K562 (cell line): ENCODE measurements at regions of chr12 and their contacts with region 1.

Region 1: DNA sequence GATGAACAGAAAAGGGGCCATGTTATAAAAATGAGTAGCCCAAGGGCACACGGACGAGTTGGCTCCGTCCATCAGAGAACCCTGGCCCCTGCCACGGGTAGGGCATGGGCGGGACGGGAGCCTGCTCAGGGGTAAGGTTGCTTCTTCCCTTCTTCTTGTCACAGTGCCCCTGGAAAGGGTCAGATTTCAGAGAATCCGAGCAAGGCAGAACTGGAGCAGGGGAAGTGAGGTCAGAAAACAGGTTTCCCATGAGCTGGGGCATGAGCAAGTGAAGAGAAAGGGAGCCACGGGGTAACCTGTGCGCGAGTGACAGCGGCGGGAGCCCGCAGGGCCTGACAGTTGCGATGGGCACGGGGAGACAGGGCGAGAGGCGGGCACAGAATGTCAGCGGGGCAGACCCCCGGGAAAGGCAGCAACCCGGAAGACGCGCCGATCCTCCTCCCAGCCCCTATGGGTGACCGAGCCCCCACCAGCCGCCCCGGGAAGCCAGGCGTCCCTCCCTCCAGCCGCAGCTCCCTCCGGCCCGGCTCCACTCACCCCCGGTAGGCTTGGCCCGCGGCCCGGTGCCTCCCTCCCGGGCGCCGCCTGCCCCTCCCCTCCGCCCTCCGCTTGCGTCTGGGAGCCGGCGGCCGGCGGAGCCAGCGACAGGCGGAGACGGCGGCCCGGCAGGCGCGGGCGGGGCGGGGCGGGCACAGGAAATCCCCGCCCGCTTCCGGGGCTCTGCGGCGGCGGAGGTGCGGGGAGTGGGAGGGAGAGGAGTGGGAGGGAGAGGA is at the start of gene ZNF641:
- DNase-seq: peak; percentile 87 to 89 (median 88)
- ATAC-seq: peak; percentile 91
- H3K4me3 ChIP-seq: peak within 1 kb of the TSS; percentile 74
- H3K27ac ChIP-seq: peak within 1 kb of the TSS; percentile 95
- H3K4me1 ChIP-seq: peaks cover 8 to 19% of the 10 kb centered on the region in 2 experiments; a peak in 4 of 5 replicates
- H3K27me3 ChIP-seq: no peaks in the 10 kb centered on the region
- CTCF ChIP-seq: no peak
- EP300 ChIP-seq: no peak
- POLR2A ChIP-seq: no peak; the same call in 1 of the 2 replicates
- RAD21 ChIP-seq: no peak
- polyA plus RNA-seq, gene ZNF641: 2.5 to 3.0 TPM

Region 2: GRCh38 chr12:48197971-48198671 is 152.3 kb before region 1 on chr12:
- CTCF ChIA-PET with region 1: no interaction called
- POLR2A ChIA-PET with region 1: no interaction called
- in situ Hi-C with region 1: no loop called
- intact Hi-C with region 1: loop called (anchors 2 kb)
- DNase-seq: peak; percentile 96 to 98 (median 96)
- ATAC-seq: peak; percentile 99
- H3K4me3 ChIP-seq: peak overlapping the region; percentile 73
- H3K27ac ChIP-seq: peak overlapping the region; percentile 100
- H3K4me1 ChIP-seq: peaks cover 4 to 9% of the 10 kb centered on the region in 2 experiments; a peak in 3 of 5 replicates
- H3K27me3 ChIP-seq: no peaks in the 10 kb centered on the region; a peak in 1 of 5 replicates
- CTCF ChIP-seq: peak in 2 of 3 experiments; percentile 0 to 18; a peak in 2 of 6 replicates
- EP300 ChIP-seq: no peak
- POLR2A ChIP-seq: peak; percentile 98
- RAD21 ChIP-seq: 0 out of 4 replicates have a peak, but pooled peaks of 1 of the 2 experiments have one; percentile 5

Region 3: GRCh38 chr12:48527891-48528675 is 177.6 kb after region 1 on chr12:
- CTCF ChIA-PET with region 1: no interaction called
- POLR2A ChIA-PET with region 1: no interaction called
- in situ Hi-C with region 1: no loop called
- intact Hi-C with region 1: no loop called
- DNase-seq: no peak
- ATAC-seq: no peak; the same call in 2 of the 3 replicates
- H3K4me3 ChIP-seq: no peak overlapping the region
- H3K27ac ChIP-seq: no peak overlapping the region
- H3K4me1 ChIP-seq: peaks cover 0 to 8% of the 10 kb centered on the region in 2 experiments; a peak in 2 of 5 replicates
- H3K27me3 ChIP-seq: peaks cover 6 to 23% of the 10 kb centered on the region in 2 experiments; a peak in 4 of 5 replicates
- CTCF ChIP-seq: no peak
- EP300 ChIP-seq: no peak
- POLR2A ChIP-seq: no peak
- RAD21 ChIP-seq: no peak